ENCODE measurements at regions of chr6 and their contacts with region 1.

Region 1: GRCh38 chr6:13795041-13795750 is 19.2 kb downstream of the MCUR1 start:
- DNase-seq: peak; percentile 75 to 89 (median 81)
- ATAC-seq: peak; percentile 100
- H3K4me3 ChIP-seq: no peak overlapping the region
- H3K27ac ChIP-seq: no peak overlapping the region
- H3K4me1 ChIP-seq: no peaks in the 10 kb centered on the region
- H3K27me3 ChIP-seq: no peaks in the 10 kb centered on the region
- CTCF ChIP-seq: peak; percentile 85 to 96 (median 96)
- EP300 ChIP-seq: no peak
- POLR2A ChIP-seq: no peak
- RAD21 ChIP-seq: peak; percentile 87 to 92

Region 2: DNA sequence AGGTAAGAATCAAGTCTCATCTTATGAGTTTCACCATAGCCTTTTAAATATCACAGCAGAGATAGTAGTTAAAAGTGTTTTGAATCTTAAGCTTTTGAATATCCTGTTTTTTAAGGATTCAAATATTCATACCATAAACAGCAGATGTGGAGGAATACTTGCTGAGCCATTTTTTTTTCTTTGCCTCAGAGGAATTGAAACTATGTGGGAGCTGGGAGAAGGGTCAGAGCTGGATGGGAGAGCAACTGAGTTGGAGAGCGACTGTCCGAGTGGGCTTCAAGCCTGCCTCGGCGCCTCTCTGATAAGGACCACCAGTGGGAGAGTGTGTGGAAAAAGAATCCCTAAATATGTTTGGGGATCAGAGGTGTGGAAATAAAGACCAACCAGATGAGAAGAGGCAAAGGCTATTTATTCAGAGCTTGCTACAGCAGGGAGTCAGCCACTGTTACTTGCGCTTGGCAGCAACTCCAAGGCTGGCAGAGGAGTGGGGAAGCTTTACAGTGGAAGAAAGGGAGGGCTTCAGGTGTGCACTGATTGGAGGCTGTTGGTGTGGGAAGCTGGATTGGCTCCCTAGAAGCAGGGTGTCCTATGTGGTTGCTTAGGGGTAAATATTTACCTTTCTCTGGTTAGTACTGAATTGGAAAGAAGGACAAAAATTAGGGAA is 53.5 kb after region 1 on chr6:
- CTCF ChIA-PET with region 1: no interaction called
- POLR2A ChIA-PET with region 1: no interaction called
- in situ Hi-C with region 1: no loop called
- intact Hi-C with region 1: loop called (anchors 1 kb)
- DNase-seq: no peak
- ATAC-seq: no peak
- H3K4me3 ChIP-seq: no peak overlapping the region
- H3K27ac ChIP-seq: no peak overlapping the region
- H3K4me1 ChIP-seq: no peaks in the 10 kb centered on the region
- H3K27me3 ChIP-seq: no peaks in the 10 kb centered on the region
- CTCF ChIP-seq: no peak
- EP300 ChIP-seq: no peak
- POLR2A ChIP-seq: no peak
- RAD21 ChIP-seq: no peak

Measured in K562 (cell line).